Calu3 (cell line): ENCODE measurements at regions of chr6 and their contacts with region 1.

Region 1: GRCh38 chr6:167501781-167502385 is 177.0 kb downstream of the TTLL2 start:
- DNase-seq: peak; percentile 67
- H3K4me3 Mint-ChIP-seq: no peak overlapping the region
- H3K27ac Mint-ChIP-seq: no peak overlapping the region
- H3K4me1 Mint-ChIP-seq: no peaks in the 10 kb centered on the region
- H3K27me3 Mint-ChIP-seq: peaks cover 37% of the 10 kb centered on the region
- CTCF ChIP-seq: peak; percentile 48

Region 2: GRCh38 chr6:166760288-166760687 is 741.6 kb before region 1 on chr6:
- CTCF ChIA-PET with region 1: no interaction called
- intact Hi-C with region 1: no loop called
- DNase-seq: no peak
- H3K4me3 Mint-ChIP-seq: no peak overlapping the region
- H3K27ac Mint-ChIP-seq: no peak overlapping the region
- H3K4me1 Mint-ChIP-seq: peaks cover 11% of the 10 kb centered on the region
- H3K27me3 Mint-ChIP-seq: peaks cover 41% of the 10 kb centered on the region
- CTCF ChIP-seq: no peak

Region 3: GRCh38 chr6:167428664-167429333 is 73.1 kb before region 1 on chr6:
- CTCF ChIA-PET with region 1: no interaction called
- intact Hi-C with region 1: no loop called
- DNase-seq: no peak
- H3K4me3 Mint-ChIP-seq: no peak overlapping the region
- H3K27ac Mint-ChIP-seq: no peak overlapping the region
- H3K4me1 Mint-ChIP-seq: no peaks in the 10 kb centered on the region
- H3K27me3 Mint-ChIP-seq: peaks cover 81% of the 10 kb centered on the region
- CTCF ChIP-seq: no peak

Region 4: GRCh38 chr6:167683028-167683862 is 181.4 kb after region 1 on chr6:
- CTCF ChIA-PET with region 1: no interaction called
- intact Hi-C with region 1: loop called (anchors 2 kb)
- DNase-seq: peak; percentile 82
- H3K4me3 Mint-ChIP-seq: no peak overlapping the region
- H3K27ac Mint-ChIP-seq: peak overlapping the region; percentile 89
- H3K4me1 Mint-ChIP-seq: peaks cover 57% of the 10 kb centered on the region
- H3K27me3 Mint-ChIP-seq: no peaks in the 10 kb centered on the region
- CTCF ChIP-seq: no peak

Region 5: DNA sequence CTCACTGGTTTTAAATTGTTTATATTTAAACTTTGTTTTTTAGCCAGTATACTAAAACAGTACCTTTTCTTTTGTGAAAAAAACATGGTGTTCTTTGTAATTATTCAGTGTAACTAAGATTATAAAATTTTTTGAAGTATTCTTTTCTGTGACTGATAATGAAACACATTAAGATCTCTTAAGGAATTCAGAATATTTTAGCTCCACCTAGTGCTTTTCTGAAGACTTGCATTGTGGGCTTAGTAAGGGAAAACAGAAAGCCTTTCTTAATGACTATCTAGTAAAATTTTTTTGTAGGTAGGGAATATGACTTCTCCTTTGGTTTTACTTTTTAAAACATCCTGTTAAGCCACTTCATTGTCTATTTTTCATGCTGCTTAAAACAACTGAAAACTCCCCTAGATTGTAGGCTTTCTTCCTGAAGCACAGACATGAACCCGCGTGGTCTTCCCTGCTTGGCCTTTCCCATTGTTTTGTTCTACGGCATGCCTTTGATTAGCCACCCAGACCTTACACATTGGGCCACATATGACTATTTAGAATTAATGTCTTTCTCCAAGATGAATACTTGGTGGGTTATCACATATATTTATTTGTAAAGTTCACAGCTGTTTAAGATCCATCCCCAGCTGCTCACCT is 396.9 kb after region 1 on chr6:
- CTCF ChIA-PET with region 1: no interaction called
- intact Hi-C with region 1: loop called (anchors 1 kb)
- DNase-seq: no peak
- H3K4me3 Mint-ChIP-seq: no peak overlapping the region
- H3K27ac Mint-ChIP-seq: no peak overlapping the region
- H3K4me1 Mint-ChIP-seq: peaks cover 5% of the 10 kb centered on the region
- H3K27me3 Mint-ChIP-seq: no peaks in the 10 kb centered on the region
- CTCF ChIP-seq: peak; percentile 45